CD4-positive, alpha-beta T cell (primary cell): ENCODE measurements at regions of chr19 and their contacts with region 1.

Region 1: GRCh38 chr19:49097455-49098288 is 12.4 kb downstream of the SNRNP70 start:
- DNase-seq: peak; percentile 61 to 87 (median 68)
- ATAC-seq: peak; percentile 93
- H3K4me3 ChIP-seq: no peak overlapping the region
- H3K4me3 Mint-ChIP-seq: no peak overlapping the region
- H3K27ac ChIP-seq: no peak overlapping the region
- H3K27ac Mint-ChIP-seq: peak overlapping the region; percentile 30
- H3K4me1 ChIP-seq: peaks cover 14% of the 10 kb centered on the region
- H3K4me1 Mint-ChIP-seq: peaks cover 21% of the 10 kb centered on the region
- H3K27me3 ChIP-seq: no peaks in the 10 kb centered on the region
- H3K27me3 Mint-ChIP-seq: no peaks in the 10 kb centered on the region
- CTCF ChIP-seq: peak; percentile 96

Region 2: DNA sequence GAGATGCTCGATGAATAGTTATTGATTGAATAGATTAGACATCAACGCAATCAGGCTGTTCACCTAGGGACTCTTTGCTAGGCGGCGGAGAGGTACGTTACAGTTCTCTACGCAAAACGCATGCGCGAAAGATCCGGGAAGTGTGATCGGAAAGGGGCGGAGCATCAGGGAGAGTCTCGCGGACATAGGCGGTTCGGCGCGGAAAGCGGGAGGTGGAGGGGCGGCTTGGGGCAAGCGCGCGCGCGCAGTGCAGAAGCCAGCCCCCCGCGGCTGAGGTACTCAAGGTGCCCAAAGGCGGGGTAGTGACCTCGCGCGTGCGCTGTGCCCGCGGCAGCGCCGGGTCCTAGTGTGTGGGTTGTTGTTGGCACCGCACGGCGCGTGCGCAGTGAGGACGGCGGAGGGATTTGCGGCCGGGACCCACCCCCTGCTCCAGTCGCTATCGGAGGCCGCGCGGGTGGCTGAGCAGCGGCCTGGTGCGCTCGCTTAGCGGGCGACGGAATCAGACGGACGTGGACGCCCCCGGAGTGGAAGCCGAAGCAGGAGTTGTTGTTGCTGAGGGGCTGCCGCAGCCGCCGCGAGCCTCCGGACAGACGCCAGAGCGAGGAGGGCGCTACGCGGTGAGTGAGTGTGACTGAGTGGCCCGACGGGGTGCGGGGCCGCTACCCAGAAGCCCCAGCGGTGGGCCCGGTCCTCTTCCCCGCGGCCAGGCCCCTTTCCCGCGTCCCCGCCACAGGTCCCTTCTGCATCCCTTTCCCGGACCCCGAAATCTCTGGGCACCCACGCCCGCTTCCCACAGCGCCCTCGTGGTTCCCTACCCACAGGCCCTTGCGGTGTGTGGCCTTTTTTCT is 12.4 kb before region 1 on chr19 and contains the start of gene SNRNP70:
- CTCF ChIA-PET with region 1: interaction called, 24 read pairs
- POLR2A ChIA-PET with region 1: interaction called, 3 read pairs
- intact Hi-C with region 1: no loop called
- DNase-seq: peak; percentile 96 to 100 (median 99)
- ATAC-seq: peak; percentile 92
- H3K4me3 ChIP-seq: peak within 1 kb of the TSS; percentile 94
- H3K4me3 Mint-ChIP-seq: peak within 1 kb of the TSS; percentile 86
- H3K27ac ChIP-seq: peak within 1 kb of the TSS; percentile 68 to 75
- H3K27ac Mint-ChIP-seq: peak within 1 kb of the TSS; percentile 87
- H3K4me1 ChIP-seq: peaks cover 45% of the 10 kb centered on the region
- H3K4me1 Mint-ChIP-seq: peaks cover 36% of the 10 kb centered on the region
- H3K27me3 ChIP-seq: no peaks in the 10 kb centered on the region
- H3K27me3 Mint-ChIP-seq: peaks cover 5% of the 10 kb centered on the region
- CTCF ChIP-seq: no peak
- total RNA-seq, gene SNRNP70: 375 to 397 TPM

Region 3: DNA sequence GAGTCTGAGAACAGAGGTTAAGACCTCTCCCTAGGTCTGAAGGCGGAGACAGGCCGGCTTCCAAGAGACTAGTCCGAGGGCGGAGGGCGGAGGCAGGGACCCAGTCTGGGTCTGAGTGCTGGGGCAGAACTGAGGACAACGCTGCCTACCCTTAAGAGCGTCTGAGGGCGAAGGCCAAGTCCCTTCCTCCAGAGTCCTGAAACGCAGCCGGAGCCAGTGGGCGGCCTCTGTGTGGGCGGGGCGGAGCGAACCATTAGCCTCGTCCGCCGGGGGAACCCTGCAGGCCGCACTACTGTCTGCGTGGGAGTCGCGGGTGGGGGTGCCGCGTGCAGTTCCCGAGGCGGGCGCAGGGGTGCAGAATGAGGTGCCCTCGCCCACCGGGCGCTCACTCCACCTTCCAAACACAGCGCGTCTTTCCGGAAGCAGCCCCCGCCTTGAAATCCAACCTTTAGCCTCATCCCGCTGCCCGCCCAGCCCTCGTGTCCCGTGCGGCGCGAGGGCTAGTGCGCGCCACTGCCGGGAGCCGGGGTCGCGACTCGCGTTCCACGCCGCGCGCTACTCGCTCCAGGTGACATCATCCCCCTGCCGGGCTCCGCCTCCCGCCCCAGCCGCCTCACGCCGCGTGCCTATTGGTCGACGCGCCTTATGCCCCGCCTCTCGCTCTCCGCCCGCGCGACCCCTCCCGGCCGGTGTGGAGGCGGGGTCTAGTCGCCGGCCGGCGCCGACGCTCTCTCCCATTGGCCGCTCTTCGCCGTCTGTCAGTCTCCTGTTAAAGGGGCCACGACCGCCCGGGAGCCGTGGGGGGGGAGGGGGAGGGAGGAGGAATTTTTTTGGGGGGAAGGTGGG is 21.1 kb after region 1 on chr19 and contains the start of gene C19orf73:
- CTCF ChIA-PET with region 1: interaction called, 25 read pairs
- POLR2A ChIA-PET with region 1: interaction called, 3 read pairs
- intact Hi-C with region 1: no loop called
- DNase-seq: peak; percentile 91 to 99 (median 95)
- ATAC-seq: peak; percentile 78
- H3K4me3 ChIP-seq: peak within 1 kb of the TSS; percentile 69
- H3K4me3 Mint-ChIP-seq: peak within 1 kb of the TSS; percentile 92
- H3K27ac ChIP-seq: peak within 1 kb of the TSS; percentile 89 to 92
- H3K27ac Mint-ChIP-seq: peak within 1 kb of the TSS; percentile 82
- H3K4me1 ChIP-seq: peaks cover 45% of the 10 kb centered on the region
- H3K4me1 Mint-ChIP-seq: peaks cover 41% of the 10 kb centered on the region
- H3K27me3 ChIP-seq: no peaks in the 10 kb centered on the region
- H3K27me3 Mint-ChIP-seq: no peaks in the 10 kb centered on the region
- CTCF ChIP-seq: peak; percentile 46
- total RNA-seq, gene C19orf73: 1.5 to 2.3 TPM

Region 4: GRCh38 chr19:49148784-49149651 is 51.3 kb after region 1 on chr19:
- CTCF ChIA-PET with region 1: interaction called, 18 read pairs
- POLR2A ChIA-PET with region 1: no interaction called
- intact Hi-C with region 1: loop called (anchors 1 kb)
- DNase-seq: peak; percentile 50 to 88 (median 72)
- ATAC-seq: peak; percentile 44
- H3K4me3 ChIP-seq: peak overlapping the region; percentile 62
- H3K4me3 Mint-ChIP-seq: peak overlapping the region; percentile 86
- H3K27ac ChIP-seq: no peak overlapping the region
- H3K27ac Mint-ChIP-seq: no peak overlapping the region
- H3K4me1 ChIP-seq: peaks cover 49% of the 10 kb centered on the region
- H3K4me1 Mint-ChIP-seq: peaks cover 52% of the 10 kb centered on the region
- H3K27me3 ChIP-seq: peaks cover 55 to 56% of the 10 kb centered on the region in 2 experiments
- H3K27me3 Mint-ChIP-seq: peaks cover 88% of the 10 kb centered on the region
- CTCF ChIP-seq: no peak

Region 5: GRCh38 chr19:49200238-49200862 is 102.7 kb after region 1 on chr19:
- CTCF ChIA-PET with region 1: interaction called, 31 read pairs
- POLR2A ChIA-PET with region 1: interaction called, 8 read pairs
- intact Hi-C with region 1: loop called (anchors 2 kb)
- DNase-seq: peak in 2 of 14 experiments; percentile 22 to 50
- ATAC-seq: no peak
- H3K4me3 ChIP-seq: no peak overlapping the region
- H3K4me3 Mint-ChIP-seq: no peak overlapping the region
- H3K27ac ChIP-seq: no peak overlapping the region
- H3K27ac Mint-ChIP-seq: no peak overlapping the region
- H3K4me1 ChIP-seq: no peaks in the 10 kb centered on the region
- H3K4me1 Mint-ChIP-seq: no peaks in the 10 kb centered on the region
- H3K27me3 ChIP-seq: no peaks in the 10 kb centered on the region
- H3K27me3 Mint-ChIP-seq: peaks cover 10% of the 10 kb centered on the region
- CTCF ChIP-seq: no peak